Lower leg skin (tissue), 4 donors: ENCODE measurements at regions of chr5 and their contacts with region 1.

Region 1: DNA sequence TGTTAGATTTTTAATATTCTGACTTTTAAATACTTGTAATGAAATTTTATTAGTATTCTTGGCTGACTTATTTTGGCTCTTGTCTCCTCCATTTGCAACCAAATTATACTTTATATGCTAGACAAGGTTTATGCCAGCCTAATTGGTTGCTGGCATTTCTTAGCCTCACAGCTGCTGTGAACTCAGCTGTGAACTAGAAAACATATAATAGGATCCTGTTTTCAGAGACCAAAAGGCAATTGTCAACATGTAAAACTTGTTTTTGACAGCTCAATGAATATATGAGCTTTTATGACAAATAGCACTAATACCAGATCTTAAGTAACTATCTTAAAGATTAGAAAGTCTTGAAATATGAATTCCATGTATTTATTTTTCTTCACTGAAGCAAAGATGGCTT is 25.9 kb downstream of the KIF2A start:
- DNase-seq: no peak
- H3K4me3 ChIP-seq: no peak overlapping the region
- CTCF ChIP-seq: no peak
- POLR2A ChIP-seq: no peak

Region 2: DNA sequence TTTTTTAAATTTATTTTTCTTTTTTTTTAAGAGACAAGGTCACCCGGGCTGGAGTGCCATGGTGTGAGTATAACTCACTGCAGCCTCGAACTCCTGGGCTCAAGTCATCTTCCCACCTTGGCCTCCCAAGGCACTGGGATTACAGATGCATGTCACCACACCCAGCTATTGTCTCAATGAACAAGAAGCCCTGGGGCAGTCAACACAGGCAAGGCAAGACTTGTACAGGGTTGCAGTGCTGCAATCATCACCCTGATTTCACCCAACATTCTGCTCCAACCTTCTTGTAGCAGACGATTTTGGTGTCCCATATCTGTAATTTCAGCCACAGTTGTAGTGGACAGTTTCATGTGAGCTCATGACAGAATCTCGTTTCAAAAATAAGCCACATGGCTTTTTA is 231.7 kb before region 1 on chr5:
- intact Hi-C with region 1: no loop called
- DNase-seq: no peak
- H3K4me3 ChIP-seq: no peak overlapping the region
- CTCF ChIP-seq: no peak
- POLR2A ChIP-seq: no peak

Region 3: GRCh38 chr5:62231576-62231975 is 100.3 kb before region 1 on chr5:
- intact Hi-C with region 1: loop called (anchors 10 kb)
- DNase-seq: no peak
- H3K4me3 ChIP-seq: no peak overlapping the region
- CTCF ChIP-seq: no peak
- POLR2A ChIP-seq: no peak